ENCODE measurements at regions of chr5 and their contacts with region 1.

Region 1: DNA sequence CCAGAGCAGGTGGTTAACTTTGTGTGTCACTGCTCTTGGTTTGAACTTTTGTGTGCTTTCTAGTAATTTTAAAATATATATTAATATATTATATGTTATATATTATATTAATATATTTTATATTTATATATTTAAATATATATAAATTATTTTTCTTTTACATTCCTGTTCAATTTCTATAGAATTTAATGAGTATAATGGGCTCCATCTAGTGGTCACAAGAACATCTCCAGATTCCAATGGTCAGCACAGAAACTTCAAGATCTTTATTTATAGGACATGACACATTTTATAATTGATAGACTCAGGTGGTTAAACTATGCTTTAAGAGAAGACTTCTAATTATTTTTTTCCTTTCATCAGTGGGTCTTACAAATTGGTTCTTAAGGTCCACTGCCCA is 39.1 kb downstream of the COL23A1 start:
- DNase-seq: peak in 1 of 2 donors; percentile 15
- ATAC-seq: no peak
- H3K4me3 ChIP-seq: no peak overlapping the region
- H3K4me3 Mint-ChIP-seq: no peak overlapping the region
- H3K27ac ChIP-seq: no peak overlapping the region
- H3K27ac Mint-ChIP-seq: no peak overlapping the region
- H3K4me1 ChIP-seq: no peaks in the 10 kb centered on the region
- H3K4me1 Mint-ChIP-seq: peaks cover 0 to 5% of the 10 kb centered on the region in 2 donors
- H3K27me3 ChIP-seq: no peaks in the 10 kb centered on the region
- H3K27me3 Mint-ChIP-seq: peaks cover 0 to 9% of the 10 kb centered on the region in 2 donors
- CTCF ChIP-seq: peak; percentile 13

Region 2: DNA sequence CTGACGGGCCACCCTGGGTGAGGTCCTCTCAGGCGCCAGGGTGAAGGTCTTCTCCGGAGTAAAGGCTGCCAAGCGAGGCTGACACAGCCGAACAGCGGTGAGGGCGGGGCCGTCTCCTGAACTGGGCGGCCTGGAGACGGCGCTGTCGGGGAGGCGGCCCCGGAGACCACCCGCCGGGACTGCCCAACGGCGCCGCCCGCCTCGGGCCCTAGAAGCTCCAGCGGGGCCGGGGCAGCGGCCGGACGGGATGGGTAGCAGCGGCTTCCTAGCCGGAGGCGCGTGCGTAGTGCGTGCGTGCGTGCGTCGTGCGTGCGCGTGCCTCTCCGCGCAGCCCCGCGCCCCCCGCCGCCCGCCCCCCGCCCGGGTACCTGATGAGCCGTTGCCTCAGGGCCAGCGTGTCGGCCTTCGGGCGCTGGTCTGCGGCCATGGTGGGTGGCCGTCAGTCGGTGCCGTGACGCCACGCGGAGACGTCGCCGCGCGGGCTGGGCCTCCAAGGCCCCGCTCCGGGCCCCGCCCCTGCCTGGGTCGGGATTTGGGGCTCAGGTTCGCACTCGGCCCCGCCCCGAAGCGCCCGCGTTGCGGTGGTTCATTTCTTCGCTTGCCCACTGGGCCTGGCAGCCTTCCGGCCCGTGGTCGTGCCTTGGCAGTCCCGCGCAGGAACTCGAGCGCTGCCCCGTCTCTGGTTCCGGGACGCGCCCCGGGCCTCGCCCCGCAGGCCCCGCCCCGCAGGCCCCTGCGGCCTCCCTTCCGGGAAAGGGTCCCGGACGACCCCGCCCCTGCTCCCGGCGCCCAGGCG is 318.7 kb before region 1 on chr5 and contains the start of gene PHYKPL:
- intact Hi-C with region 1: loop called (anchors 2 kb)
- DNase-seq: peak; percentile 54 to 81
- ATAC-seq: peak; percentile 67 to 79 (median 70)
- H3K4me3 ChIP-seq: peak within 1 kb of the TSS; percentile 70
- H3K4me3 Mint-ChIP-seq: peak within 1 kb of the TSS; percentile 87
- H3K27ac ChIP-seq: peak within 1 kb of the TSS; percentile 75
- H3K27ac Mint-ChIP-seq: peak within 1 kb of the TSS; percentile 70 to 77
- H3K4me1 ChIP-seq: peaks cover 60% of the 10 kb centered on the region
- H3K4me1 Mint-ChIP-seq: peaks cover 67 to 68% of the 10 kb centered on the region in 2 donors
- H3K27me3 ChIP-seq: no peaks in the 10 kb centered on the region
- H3K27me3 Mint-ChIP-seq: no peaks in the 10 kb centered on the region
- CTCF ChIP-seq: no peak
- total RNA-seq, gene PHYKPL: 111 to 134 (median 131) TPM

Region 3: DNA sequence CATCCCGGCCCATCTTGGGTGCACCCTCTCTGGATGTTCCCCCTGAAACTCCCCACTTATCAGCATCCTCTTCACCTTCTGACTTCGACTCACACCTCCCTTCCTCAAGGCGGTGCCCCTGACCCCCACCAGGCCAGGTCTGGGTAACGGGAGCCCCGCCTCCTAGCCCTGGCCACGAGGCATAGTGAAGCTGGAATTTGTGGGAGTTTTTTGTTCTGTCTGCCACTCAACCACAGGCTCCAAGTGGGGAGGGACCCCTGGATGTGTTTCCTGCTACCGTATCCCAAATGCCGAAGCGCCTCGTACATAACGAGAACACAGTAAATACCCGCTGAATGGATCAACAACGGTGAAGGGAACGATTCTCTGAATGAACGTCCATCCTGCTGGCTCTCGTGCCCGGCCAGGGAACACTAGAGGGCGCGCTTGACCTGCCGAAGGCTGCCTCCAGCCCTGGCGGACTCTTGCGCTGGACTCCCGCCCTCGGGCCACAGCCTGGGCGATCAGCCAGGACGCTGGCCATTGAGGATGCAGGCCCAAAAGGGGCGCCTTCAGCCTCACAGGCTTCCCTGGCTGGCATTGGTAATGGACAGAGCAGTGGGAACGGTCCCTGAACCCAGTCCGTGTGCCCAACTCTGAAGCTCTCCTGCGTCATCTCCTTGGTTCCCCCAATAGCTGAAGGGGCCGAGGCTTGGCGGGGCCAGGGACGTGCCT is 271.2 kb before region 1 on chr5:
- intact Hi-C with region 1: loop called (anchors 5 kb)
- DNase-seq: peak; percentile 59 to 67
- ATAC-seq: peak; percentile 55 to 81 (median 69)
- H3K4me3 ChIP-seq: no peak overlapping the region
- H3K4me3 Mint-ChIP-seq: no peak overlapping the region
- H3K27ac ChIP-seq: no peak overlapping the region
- H3K27ac Mint-ChIP-seq: no peak overlapping the region
- H3K4me1 ChIP-seq: peaks cover 9% of the 10 kb centered on the region
- H3K4me1 Mint-ChIP-seq: peaks cover 9% of the 10 kb centered on the region in 2 donors
- H3K27me3 ChIP-seq: no peaks in the 10 kb centered on the region
- H3K27me3 Mint-ChIP-seq: peaks cover 0 to 12% of the 10 kb centered on the region in 2 donors
- CTCF ChIP-seq: peak; percentile 90